Breast epithelium (tissue), 4 donors: ENCODE measurements at regions of chr15 and their contacts with region 1.

Region 1: GRCh38 chr15:35751413-35752133 is 205.6 kb upstream of the DPH6 start:
- DNase-seq: peak; percentile 36 to 57
- H3K4me3 ChIP-seq: peak overlapping the region in 1 of 3 donors; percentile 15
- H3K27ac ChIP-seq: no peak overlapping the region
- H3K4me1 ChIP-seq: no peaks in the 10 kb centered on the region
- H3K27me3 ChIP-seq: no peaks in the 10 kb centered on the region
- CTCF ChIP-seq: peak; percentile 60 to 73 (median 62)
- POLR2A ChIP-seq: no peak

Region 2: DNA sequence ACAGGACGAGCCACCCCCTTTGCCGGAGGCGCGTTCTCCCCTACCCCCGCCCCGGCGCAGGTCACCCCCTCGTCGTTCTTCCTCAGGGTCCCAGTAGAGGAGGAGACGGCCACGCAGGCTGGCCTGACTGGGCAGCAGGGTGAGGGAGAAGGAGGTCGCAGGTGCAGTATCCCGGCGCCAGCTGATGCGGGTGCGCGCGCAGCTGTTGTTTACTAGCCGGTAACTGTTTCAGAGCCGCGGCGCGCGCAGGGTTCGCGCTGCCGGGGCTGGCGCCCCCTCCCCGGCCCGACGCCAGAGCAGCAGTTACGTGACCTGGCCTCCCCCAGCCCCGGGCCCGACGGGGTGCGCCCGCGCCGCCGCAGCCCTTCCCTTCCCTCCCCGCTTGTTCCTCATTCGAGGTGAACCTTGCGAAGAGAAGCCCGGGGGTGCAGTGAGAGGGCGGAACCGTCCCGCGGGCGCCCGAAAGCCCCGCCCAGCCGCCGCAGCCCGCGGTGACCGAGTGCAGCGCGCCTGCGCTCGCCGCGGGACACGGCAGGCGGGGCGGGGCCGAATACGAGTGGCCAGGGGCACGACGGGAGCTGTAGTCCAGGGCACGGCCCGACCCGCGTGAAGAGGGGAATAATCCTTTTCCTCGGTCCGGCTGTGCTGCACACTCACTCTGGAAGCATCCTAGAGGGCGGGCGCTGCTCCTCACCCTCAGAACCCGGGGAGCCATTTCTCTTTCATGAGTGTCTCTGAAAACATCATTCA is 1413.8 kb before region 1 on chr15 and contains the start of gene SLC12A6:
- intact Hi-C with region 1: loop called (anchors 10 kb)
- DNase-seq: peak; percentile 69 to 80
- H3K4me3 ChIP-seq: peak within 1 kb of the TSS; percentile 91 to 94 (median 94)
- H3K27ac ChIP-seq: peak within 1 kb of the TSS; percentile 86 to 87
- H3K4me1 ChIP-seq: no peaks in the 10 kb centered on the region
- H3K27me3 ChIP-seq: no peaks in the 10 kb centered on the region
- CTCF ChIP-seq: no peak
- POLR2A ChIP-seq: no peak
- total RNA-seq, gene SLC12A6: 22.3 to 28.8 (median 25.8) TPM

Region 3: GRCh38 chr15:35768949-35769348 is 17.4 kb after region 1 on chr15:
- intact Hi-C with region 1: loop called (anchors 1 kb)
- DNase-seq: no peak
- H3K4me3 ChIP-seq: no peak overlapping the region
- H3K27ac ChIP-seq: no peak overlapping the region
- H3K4me1 ChIP-seq: no peaks in the 10 kb centered on the region
- H3K27me3 ChIP-seq: no peaks in the 10 kb centered on the region
- CTCF ChIP-seq: no peak
- POLR2A ChIP-seq: no peak

Region 4: GRCh38 chr15:37045859-37046740 is 1294.5 kb after region 1 on chr15:
- intact Hi-C with region 1: loop called (anchors 5 kb)
- DNase-seq: no peak
- H3K4me3 ChIP-seq: no peak overlapping the region
- H3K27ac ChIP-seq: no peak overlapping the region
- H3K4me1 ChIP-seq: no peaks in the 10 kb centered on the region
- H3K27me3 ChIP-seq: no peaks in the 10 kb centered on the region
- CTCF ChIP-seq: no peak
- POLR2A ChIP-seq: no peak